ENCODE measurements at regions of chr19 and their contacts with region 1.

Region 1: GRCh38 chr19:4123615-4124568 is at the start of gene MAP2K2:
- DNase-seq: peak; percentile 95 to 98 (median 96)
- ATAC-seq: peak; percentile 92 to 99 (median 98)
- H3K4me3 ChIP-seq: peak within 1 kb of the TSS; percentile 44 to 95 (median 78)
- H3K27ac ChIP-seq: peak within 1 kb of the TSS in 11 of 12 donors; percentile 31 to 84 (median 72)
- H3K4me1 ChIP-seq: peaks cover 0 to 33% (median 16%) of the 10 kb centered on the region in 12 donors
- H3K27me3 ChIP-seq: no peaks in the 10 kb centered on the region
- CTCF ChIP-seq: peak in 2 of 12 donors; percentile 17 to 22
- POLR2A ChIP-seq: peak in 1 of 2 donors; percentile 86
- total RNA-seq, gene MAP2K2: 95.3 to 154 (median 108) TPM

Region 2: GRCh38 chr19:4065430-4066175 is 58.3 kb before region 1 on chr19:
- intact Hi-C with region 1: loop called in 2 of 10 experiments (anchors 2 to 10 kb)
- DNase-seq: peak; percentile 98 to 99 (median 98)
- ATAC-seq: peak; percentile 80 to 91 (median 85)
- H3K4me3 ChIP-seq: peak overlapping the region in 11 of 12 donors; percentile 91 to 100 (median 97)
- H3K27ac ChIP-seq: peak overlapping the region; percentile 91 to 100 (median 99)
- H3K4me1 ChIP-seq: peaks cover 8 to 57% (median 44%) of the 10 kb centered on the region in 12 donors
- H3K27me3 ChIP-seq: no peaks in the 10 kb centered on the region
- CTCF ChIP-seq: peak in 1 of 12 donors; percentile 7
- POLR2A ChIP-seq: no peak

Region 3: GRCh38 chr19:4077882-4078614 is 45.8 kb before region 1 on chr19:
- intact Hi-C with region 1: loop called in 2 of 10 experiments (anchors 5 to 10 kb)
- DNase-seq: peak; percentile 84 to 89 (median 87)
- ATAC-seq: peak; percentile 71 to 92 (median 80)
- H3K4me3 ChIP-seq: peak overlapping the region in 11 of 12 donors; percentile 40 to 77 (median 61)
- H3K27ac ChIP-seq: peak overlapping the region; percentile 80 to 96 (median 88)
- H3K4me1 ChIP-seq: peaks cover 0 to 44% (median 14%) of the 10 kb centered on the region in 12 donors
- H3K27me3 ChIP-seq: no peaks in the 10 kb centered on the region
- CTCF ChIP-seq: no peak
- POLR2A ChIP-seq: peak in 1 of 2 donors; percentile 34

Region 4: DNA sequence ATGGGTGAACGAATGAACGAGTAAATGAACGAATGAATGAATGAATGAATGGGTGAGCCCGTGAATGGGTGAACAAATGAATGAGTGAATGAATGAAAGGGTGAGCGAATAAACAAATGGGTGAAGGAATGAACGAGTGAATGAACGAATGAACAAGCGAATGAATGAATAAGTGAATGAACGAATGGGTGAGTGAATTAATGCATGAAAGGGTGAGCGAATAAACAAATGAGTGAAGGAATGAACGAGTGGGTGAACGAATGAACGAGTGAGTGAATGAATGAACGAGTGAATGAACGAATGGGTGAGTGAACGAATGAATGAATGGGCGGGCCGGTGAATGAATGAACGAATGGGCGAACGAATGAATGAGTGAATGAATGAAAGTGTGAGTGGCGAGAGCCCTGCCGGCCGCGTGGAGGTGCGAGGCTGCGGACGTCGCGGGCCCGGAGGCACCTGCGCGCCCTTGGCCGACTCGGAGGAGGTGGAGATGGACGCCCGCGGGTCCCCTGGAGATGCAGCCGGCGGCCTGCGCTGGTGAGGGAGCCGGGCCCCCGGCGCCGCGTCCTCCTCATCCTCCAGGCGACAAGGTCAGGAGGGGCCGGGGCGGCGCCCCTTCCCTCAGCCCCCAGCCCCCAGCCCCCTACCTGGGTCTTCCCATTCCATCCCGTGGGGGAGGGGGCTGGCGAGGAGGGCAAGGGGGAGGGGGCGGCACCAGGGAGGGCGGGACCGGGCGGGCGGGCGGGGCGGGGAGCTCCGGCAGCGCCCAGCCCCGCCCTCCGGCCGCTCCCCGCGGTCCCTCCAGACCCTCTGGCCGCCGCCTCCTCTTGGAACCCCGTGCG is 74.0 kb after region 1 on chr19:
- intact Hi-C with region 1: no loop called
- DNase-seq: no peak
- ATAC-seq: no peak
- H3K4me3 ChIP-seq: peak overlapping the region in 1 of 12 donors; percentile 8
- H3K27ac ChIP-seq: no peak overlapping the region
- H3K4me1 ChIP-seq: peaks cover 0 to 7% (median 0%) of the 10 kb centered on the region in 12 donors
- H3K27me3 ChIP-seq: peaks cover 22 to 72% (median 50%) of the 10 kb centered on the region in 9 donors
- CTCF ChIP-seq: no peak
- POLR2A ChIP-seq: no peak

Region 5: DNA sequence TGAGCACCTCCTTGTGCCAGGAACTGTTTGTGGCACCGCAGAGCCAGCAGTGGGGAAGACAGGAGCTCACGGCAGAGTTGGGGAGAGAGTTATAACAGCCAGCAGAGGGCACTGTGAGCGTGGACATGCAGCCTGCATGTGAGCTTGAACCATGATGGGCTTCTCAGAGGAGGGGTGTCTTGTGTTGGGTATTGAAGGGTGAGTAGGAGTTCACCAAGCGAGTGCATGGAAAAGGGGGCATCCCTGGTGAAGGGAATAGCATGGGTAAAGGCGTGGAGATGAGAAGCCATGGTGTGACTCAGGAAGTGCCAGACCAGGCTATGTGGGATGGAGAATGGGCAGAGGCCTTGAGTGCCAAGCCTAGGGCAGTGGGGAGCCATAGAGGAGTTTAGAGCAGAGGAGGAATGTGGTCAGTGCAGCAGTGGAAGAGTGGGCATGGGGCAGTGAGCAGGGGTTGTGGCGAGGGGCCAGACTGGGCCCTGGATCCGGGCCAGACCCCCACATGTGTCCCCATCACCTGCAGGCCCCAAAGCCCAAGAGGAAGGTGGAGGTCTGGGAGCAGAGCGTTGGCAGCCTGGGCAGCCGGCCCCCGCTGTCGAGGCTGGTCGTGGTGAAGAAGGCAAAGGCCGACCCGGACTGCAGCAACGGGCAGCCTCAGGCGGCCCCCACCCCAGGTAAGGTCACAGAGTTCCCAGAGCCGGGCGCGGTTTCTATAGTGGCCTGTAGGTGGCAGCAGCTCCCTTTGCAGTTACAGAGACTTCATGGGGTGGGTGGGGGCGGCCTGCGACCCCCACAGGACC is 143.4 kb after region 1 on chr19:
- intact Hi-C with region 1: no loop called
- DNase-seq: peak in 3 of 5 donors; percentile 34 to 60 (median 43)
- ATAC-seq: peak in 3 of 4 donors; percentile 56 to 78 (median 72)
- H3K4me3 ChIP-seq: no peak overlapping the region
- H3K27ac ChIP-seq: no peak overlapping the region
- H3K4me1 ChIP-seq: peaks cover 0 to 7% (median 0%) of the 10 kb centered on the region in 12 donors
- H3K27me3 ChIP-seq: no peaks in the 10 kb centered on the region
- CTCF ChIP-seq: peak; percentile 75 to 92 (median 84)
- POLR2A ChIP-seq: no peak

Measured in heart left ventricle (tissue), 16 donors.